ENCODE measurements at regions of chr16 and their contacts with region 1.

Region 1: DNA sequence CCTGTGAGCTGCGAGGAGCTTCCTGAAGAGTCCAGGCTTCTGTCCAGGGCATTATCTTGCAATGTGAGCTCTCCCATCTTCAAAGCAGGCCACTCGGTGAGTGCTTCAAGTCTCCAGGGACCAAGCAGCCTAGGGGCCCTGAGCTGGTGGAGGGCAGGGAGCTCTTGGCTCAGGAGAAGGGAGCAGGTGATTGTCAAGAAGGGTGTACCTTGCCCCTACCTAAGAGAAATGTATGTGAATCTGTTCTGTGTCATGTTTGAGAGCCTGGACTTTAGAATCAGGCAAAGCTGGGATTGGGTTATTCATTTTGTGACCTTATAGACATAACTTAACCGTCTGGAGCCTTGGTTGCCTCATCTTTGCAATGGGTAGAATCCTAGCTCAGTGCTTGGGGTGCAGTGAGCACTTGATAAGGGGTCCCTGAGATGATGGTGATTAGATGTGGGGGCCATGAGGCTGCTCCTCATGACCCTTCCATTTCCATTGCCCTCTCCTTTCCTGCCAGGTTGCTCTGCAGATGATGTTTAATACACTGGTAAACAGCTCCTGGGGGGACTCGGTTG is 15.9 kb downstream of the ZNF768 start:
- DNase-seq: no peak
- H3K4me3 ChIP-seq: no peak overlapping the region
- H3K27ac ChIP-seq: no peak overlapping the region
- H3K4me1 ChIP-seq: no peaks in the 10 kb centered on the region
- H3K27me3 ChIP-seq: no peaks in the 10 kb centered on the region
- CTCF ChIP-seq: no peak

Region 2: DNA sequence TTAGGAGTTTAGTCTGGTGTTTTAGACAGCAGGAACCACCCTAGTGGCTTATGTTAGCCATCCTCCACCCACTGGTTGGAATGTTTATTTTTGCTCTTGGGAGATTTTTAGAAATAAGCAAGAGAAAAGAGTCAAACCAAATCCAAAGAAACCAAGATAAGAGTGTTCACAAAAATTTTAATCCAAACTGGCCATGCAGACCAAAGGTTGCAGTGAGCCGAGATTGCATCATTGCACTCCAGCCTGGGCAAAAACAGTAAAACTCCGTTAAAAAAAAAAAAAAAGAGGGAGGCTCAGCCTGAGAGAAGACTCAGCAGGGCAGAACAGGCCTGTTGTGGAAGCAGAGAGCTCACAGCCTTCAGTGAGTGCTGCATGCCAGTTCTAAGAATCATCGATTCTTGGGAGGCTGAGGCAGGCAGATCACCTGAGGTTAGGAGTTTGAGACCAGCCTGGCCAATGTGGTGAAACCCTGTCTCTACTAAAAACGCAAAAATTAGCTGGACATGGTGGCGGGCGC is 752.4 kb before region 1 on chr16:
- CTCF ChIA-PET with region 1: no interaction called
- POLR2A ChIA-PET with region 1: no interaction called
- intact Hi-C with region 1: no loop called
- DNase-seq: no peak
- H3K4me3 ChIP-seq: no peak overlapping the region
- H3K27ac ChIP-seq: peak overlapping the region; percentile 45
- H3K4me1 ChIP-seq: peaks cover 14% of the 10 kb centered on the region
- H3K27me3 ChIP-seq: no peaks in the 10 kb centered on the region
- CTCF ChIP-seq: peak; percentile 39; the same call in 1 of the 2 replicates

Region 3: GRCh38 chr16:30526823-30527635 is 16.6 kb after region 1 on chr16:
- CTCF ChIA-PET with region 1: no interaction called
- POLR2A ChIA-PET with region 1: no interaction called
- intact Hi-C with region 1: no loop called
- DNase-seq: peak; percentile 94 to 100
- H3K4me3 ChIP-seq: peak overlapping the region; percentile 97
- H3K27ac ChIP-seq: peak overlapping the region; percentile 79
- H3K4me1 ChIP-seq: peaks cover 32% of the 10 kb centered on the region
- H3K27me3 ChIP-seq: no peaks in the 10 kb centered on the region
- CTCF ChIP-seq: peak; percentile 50; the same call in 1 of the 2 replicates

Region 4: GRCh38 chr16:30609926-30610839 is 99.7 kb after region 1 on chr16 and contains the start of gene ZNF689:
- CTCF ChIA-PET with region 1: no interaction called
- POLR2A ChIA-PET with region 1: no interaction called
- intact Hi-C with region 1: no loop called
- DNase-seq: peak; percentile 88 to 98
- H3K4me3 ChIP-seq: peak within 1 kb of the TSS; percentile 89
- H3K27ac ChIP-seq: peak within 1 kb of the TSS; percentile 49
- H3K4me1 ChIP-seq: peaks cover 5% of the 10 kb centered on the region; the same call in 1 of the 2 replicates
- H3K27me3 ChIP-seq: no peaks in the 10 kb centered on the region
- CTCF ChIP-seq: no peak; the same call in 1 of the 2 replicates
- total RNA-seq, gene ZNF689: 9.1 and 10.1 TPM in 2 replicates

Region 5: DNA sequence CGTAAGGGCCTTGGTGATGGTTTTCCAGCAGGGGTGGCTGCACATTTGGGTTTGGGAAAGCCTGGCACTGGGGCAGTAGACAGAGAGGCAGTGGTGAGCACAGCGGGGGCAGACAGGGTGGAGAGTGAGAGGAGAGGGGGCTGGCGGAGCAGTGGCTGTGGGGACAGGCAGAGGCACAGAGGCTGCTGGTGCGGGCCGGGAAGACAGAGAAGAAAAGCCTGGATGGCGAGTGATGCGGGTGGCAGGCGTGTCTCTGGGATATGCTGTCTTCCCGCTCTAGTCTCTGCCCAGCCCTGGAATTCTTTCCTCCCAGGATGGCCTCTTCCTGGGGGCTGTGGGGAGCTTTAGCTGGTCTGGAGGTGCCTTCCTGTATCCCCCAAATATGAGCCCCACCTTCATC is 899.6 kb after region 1 on chr16:
- CTCF ChIA-PET with region 1: interaction called, 10 read pairs
- POLR2A ChIA-PET with region 1: no interaction called
- intact Hi-C with region 1: no loop called
- DNase-seq: no peak
- H3K4me3 ChIP-seq: no peak overlapping the region
- H3K27ac ChIP-seq: no peak overlapping the region
- H3K4me1 ChIP-seq: no peaks in the 10 kb centered on the region
- H3K27me3 ChIP-seq: peaks cover 19% of the 10 kb centered on the region; the same call in 1 of the 2 replicates
- CTCF ChIP-seq: no peak